H1 (cell line): ENCODE measurements at regions of chr2 and their contacts with region 1.

Region 1: DNA sequence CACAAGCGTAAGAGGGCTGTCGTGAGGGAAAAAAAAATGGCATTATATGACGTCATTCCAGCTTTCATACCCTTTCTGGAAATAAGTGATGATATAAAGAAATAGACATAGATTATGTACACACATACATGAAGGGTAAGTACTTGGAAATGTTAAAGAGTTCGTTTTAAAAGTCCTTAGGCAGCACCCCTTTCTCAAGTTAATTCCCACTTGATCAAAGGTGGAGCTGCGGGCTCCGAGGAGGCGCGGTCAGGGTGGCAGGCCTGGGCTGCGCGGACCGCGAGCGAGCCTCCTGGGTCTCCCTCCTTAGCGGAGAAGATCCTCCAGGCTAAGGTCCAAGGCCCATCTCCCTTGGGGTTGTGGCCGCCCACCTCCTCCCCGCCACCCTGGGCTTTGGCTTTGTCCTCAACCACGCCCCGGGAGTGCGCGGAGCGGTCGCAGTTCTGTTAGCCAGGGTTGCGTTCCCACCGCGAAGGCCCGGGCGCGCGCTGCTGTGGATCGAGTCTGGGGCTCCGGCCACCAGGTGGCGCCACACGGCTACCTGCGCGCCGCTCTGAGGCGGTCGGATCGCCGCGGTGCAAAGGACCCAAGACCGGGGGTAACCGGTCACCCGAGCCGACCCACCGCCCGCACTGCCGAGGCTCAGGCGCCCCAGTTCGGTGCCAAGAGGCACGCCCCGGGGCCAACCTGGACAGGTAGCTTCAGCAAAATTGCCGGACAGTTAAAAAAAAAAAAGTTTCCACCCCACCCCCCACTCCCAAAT is 66.8 kb downstream of the HNRNPLL start:
- DNase-seq: peak in 1 of 2 experiments; percentile 97
- H3K4me3 ChIP-seq: peak overlapping the region; percentile 28 to 63 (median 52)
- H3K27ac ChIP-seq: no peak overlapping the region
- H3K4me1 ChIP-seq: peaks cover 0 to 5% (median 1%) of the 10 kb centered on the region in 4 experiments; a peak in 5 of 7 replicates
- H3K27me3 ChIP-seq: peaks cover 0 to 12% (median 6%) of the 10 kb centered on the region in 4 experiments; a peak in 4 of 7 replicates
- CTCF ChIP-seq: peak; percentile 85 to 91 (median 86)
- EP300 ChIP-seq: no peak
- POLR2A ChIP-seq: no peak
- RAD21 ChIP-seq: peak; percentile 82 to 90

Region 2: GRCh38 chr2:38523728-38524437 is 12.0 kb before region 1 on chr2:
- CTCF ChIA-PET with region 1: interaction called, 47 read pairs
- POLR2A ChIA-PET with region 1: no interaction called
- DNase-seq: peak in 1 of 2 experiments; percentile 72
- H3K4me3 ChIP-seq: no peak overlapping the region
- H3K27ac ChIP-seq: no peak overlapping the region
- H3K4me1 ChIP-seq: peaks cover 4 to 11% (median 6%) of the 10 kb centered on the region in 4 experiments; a peak in 6 of 7 replicates
- H3K27me3 ChIP-seq: 0 out of 7 replicates have a peak, but pooled peaks cover 0 to 2% (median 0%) of the 10 kb centered on the region in 4 experiments
- CTCF ChIP-seq: peak; percentile 46 to 72 (median 71)
- EP300 ChIP-seq: no peak
- POLR2A ChIP-seq: no peak
- RAD21 ChIP-seq: peak; percentile 47 to 62

Region 3: GRCh38 chr2:38549071-38549704 is 13.3 kb after region 1 on chr2:
- CTCF ChIA-PET with region 1: interaction called, 38 read pairs
- POLR2A ChIA-PET with region 1: interaction called, 8 read pairs
- DNase-seq: no peak
- H3K4me3 ChIP-seq: no peak overlapping the region
- H3K27ac ChIP-seq: no peak overlapping the region
- H3K4me1 ChIP-seq: peaks cover 0 to 4% (median 1%) of the 10 kb centered on the region in 4 experiments; a peak in 1 of 7 replicates
- H3K27me3 ChIP-seq: no peaks in the 10 kb centered on the region
- CTCF ChIP-seq: no peak
- EP300 ChIP-seq: no peak
- POLR2A ChIP-seq: no peak
- RAD21 ChIP-seq: no peak

Region 4: GRCh38 chr2:38554973-38555595 is 19.2 kb after region 1 on chr2:
- CTCF ChIA-PET with region 1: interaction called, 38 read pairs
- POLR2A ChIA-PET with region 1: interaction called, 4 read pairs
- DNase-seq: no peak
- H3K4me3 ChIP-seq: no peak overlapping the region
- H3K27ac ChIP-seq: no peak overlapping the region
- H3K4me1 ChIP-seq: no peaks in the 10 kb centered on the region
- H3K27me3 ChIP-seq: no peaks in the 10 kb centered on the region
- CTCF ChIP-seq: peak in 2 of 3 experiments; percentile 43 to 66; a peak in 2 of 4 replicates
- EP300 ChIP-seq: no peak
- POLR2A ChIP-seq: no peak
- RAD21 ChIP-seq: peak; percentile 35; a peak in 2 of 4 replicates

Region 5: DNA sequence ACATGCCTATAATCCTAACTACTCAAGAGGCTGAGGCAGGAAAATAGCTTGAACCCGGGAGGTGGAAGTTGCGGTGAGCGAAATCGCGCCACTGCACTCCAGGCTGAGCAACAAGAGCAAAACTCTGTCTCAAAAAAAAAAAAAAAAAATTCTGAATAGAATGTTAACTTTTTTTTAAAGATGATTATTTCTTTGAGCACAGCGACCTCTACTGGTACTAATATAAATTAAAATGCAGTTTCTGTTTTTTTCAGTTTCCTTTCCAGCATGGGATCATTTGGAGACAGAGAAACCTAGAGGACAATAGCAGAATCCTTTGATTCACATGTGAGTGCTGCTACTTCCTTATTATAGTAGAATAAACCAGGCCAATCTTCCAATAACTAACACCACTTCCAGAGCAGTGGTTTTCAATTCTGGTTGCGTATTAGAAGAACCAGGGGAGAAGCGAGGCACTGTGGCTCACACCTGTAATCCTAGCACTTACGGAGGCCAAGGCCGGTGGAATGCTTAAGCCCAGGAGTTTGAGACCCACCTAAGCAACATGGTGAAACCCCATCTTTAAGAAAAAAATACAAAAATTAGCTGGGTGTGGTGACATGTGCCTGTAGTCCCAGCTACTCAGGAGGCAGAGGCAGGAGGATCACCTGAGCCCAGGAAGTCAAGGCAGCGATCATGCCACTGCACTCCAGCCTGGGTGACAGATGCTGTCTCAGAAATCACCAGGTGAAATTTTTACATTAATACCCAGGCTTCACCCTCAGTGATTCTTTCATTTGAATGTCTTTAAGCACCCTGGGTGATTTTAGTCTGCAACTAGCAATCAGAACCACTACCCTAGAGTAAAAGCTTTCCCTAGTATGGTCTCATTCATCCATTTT is 205.2 kb after region 1 on chr2:
- CTCF ChIA-PET with region 1: interaction called, 5 read pairs
- POLR2A ChIA-PET with region 1: interaction called, 18 read pairs
- DNase-seq: no peak
- H3K4me3 ChIP-seq: no peak overlapping the region
- H3K27ac ChIP-seq: no peak overlapping the region
- H3K4me1 ChIP-seq: peaks cover 0 to 7% (median 1%) of the 10 kb centered on the region in 4 experiments; a peak in 4 of 7 replicates
- H3K27me3 ChIP-seq: no peaks in the 10 kb centered on the region
- CTCF ChIP-seq: peak in 2 of 3 experiments; percentile 11 to 17; a peak in 2 of 4 replicates
- EP300 ChIP-seq: no peak
- POLR2A ChIP-seq: 0 out of 3 replicates have a peak, but pooled peaks of 1 of the 2 experiments have one; percentile 60
- RAD21 ChIP-seq: peak; percentile 33 to 40